Activated CD4-positive, alpha-beta memory T cell treated with anti-CD3 and anti-CD28 coated beads for 36 hours (primary cell): ENCODE measurements at regions of chr17 and their contacts with region 1.

Region 1: DNA sequence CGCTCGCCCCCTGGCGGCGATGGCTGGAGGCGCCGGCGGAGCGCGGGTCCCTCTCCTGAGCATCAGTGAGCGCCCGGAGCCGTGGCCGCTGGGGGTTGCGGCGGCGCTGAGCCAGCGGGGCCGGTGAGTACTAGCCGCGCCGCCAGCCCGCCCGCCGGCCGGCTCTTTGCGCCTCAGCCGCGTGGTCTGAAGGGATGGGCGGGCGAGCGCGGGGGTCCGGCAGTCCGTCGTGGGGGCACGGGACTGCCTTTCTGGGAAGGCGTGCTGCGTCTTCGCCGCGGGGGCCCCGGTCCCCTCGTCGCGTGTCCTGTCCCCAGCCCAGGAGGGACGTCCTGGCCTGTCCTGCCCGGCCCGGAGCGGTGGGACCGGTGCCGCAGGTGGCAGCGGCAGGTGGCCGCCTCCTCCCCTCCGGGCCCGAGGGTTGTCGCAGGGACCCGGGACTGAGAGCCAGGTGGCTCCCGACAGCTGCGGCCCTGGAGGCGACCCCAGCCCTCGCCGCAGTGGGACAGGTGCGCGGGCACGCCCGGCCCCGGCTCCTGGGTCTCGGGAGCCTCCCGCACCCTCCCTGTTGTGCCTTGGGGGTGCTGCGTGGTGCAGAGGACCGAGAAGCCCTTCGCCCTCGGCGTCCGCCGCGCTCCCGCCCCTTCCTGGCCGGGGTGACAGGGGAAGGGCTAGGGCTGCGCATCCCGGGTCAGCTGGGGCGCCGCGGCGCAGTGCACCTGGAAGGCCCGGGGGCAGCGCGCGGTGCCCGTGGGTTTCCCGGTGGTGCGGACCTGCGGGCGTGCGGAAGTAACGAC is at the start of gene SPECC1:
- DNase-seq: peak; percentile 92
- H3K4me3 Mint-ChIP-seq: peak within 1 kb of the TSS; percentile 73
- H3K27ac Mint-ChIP-seq: no peak within 1 kb of the TSS
- H3K4me1 Mint-ChIP-seq: peaks cover 11% of the 10 kb centered on the region
- H3K27me3 Mint-ChIP-seq: peaks cover 27% of the 10 kb centered on the region
- total RNA-seq, gene SPECC1: 15.4 to 17.0 TPM

Region 2: DNA sequence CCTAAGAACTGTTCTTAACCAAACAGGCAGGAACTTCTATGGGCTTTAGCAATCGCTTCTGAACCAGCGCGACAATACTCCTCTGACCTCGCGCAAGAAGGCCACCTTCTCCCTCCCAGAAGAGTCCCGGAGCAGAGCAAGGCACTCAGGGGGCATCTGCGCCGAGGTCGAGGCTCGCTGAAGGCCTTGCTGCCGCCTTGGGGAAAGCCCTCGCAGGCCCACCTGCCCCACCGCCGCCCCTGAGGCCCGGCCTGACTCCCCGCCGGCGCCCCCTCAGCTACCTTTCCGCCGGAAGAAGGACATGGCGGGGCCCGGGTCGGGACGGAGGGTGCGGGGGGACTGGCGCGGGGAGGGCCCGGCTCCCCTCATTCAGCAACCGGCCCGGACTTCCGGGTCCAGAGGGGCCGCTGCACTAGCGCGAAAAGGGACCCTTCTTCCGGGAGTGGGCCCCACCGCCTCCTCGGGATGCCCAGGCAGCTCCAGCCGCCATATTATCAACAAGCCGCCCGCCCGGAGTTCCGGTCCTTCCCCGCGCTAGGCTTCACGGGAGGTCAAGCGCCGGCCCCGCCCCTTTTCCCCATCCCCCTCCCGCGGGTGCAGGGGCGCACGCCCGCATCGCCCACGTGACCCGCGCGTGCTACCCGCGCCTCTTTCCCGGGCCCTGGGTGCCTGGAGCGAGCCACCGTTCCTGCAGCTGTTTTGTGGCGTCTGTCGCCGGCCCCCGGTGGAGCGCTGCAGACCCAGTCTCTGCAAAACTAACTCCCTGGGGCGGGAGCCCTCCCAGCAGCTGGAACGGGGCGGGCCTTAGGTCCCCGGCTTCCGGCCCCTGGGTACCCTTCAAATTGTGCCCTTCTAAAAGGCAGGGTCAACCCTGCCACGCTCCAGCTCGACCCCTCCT is 31.9 kb before region 1 on chr17 and contains the start of gene AKAP10:
- CTCF ChIA-PET with region 1: interaction called, 24 read pairs
- POLR2A ChIA-PET with region 1: interaction called, 3 read pairs
- intact Hi-C with region 1: loop called (anchors 1 kb)
- DNase-seq: peak; percentile 96
- H3K4me3 Mint-ChIP-seq: peak within 1 kb of the TSS; percentile 94
- H3K27ac Mint-ChIP-seq: peak within 1 kb of the TSS; percentile 97
- H3K4me1 Mint-ChIP-seq: peaks cover 49% of the 10 kb centered on the region
- H3K27me3 Mint-ChIP-seq: no peaks in the 10 kb centered on the region
- total RNA-seq, gene AKAP10: 28.4 to 31.8 TPM

Region 3: GRCh38 chr17:19992803-19993713 is 16.4 kb before region 1 on chr17:
- CTCF ChIA-PET with region 1: interaction called, 71 read pairs
- POLR2A ChIA-PET with region 1: no interaction called
- intact Hi-C with region 1: no loop called
- DNase-seq: peak; percentile 85
- H3K4me3 Mint-ChIP-seq: peak overlapping the region; percentile 16
- H3K27ac Mint-ChIP-seq: no peak overlapping the region
- H3K4me1 Mint-ChIP-seq: peaks cover 9% of the 10 kb centered on the region
- H3K27me3 Mint-ChIP-seq: peaks cover 5% of the 10 kb centered on the region

Region 4: DNA sequence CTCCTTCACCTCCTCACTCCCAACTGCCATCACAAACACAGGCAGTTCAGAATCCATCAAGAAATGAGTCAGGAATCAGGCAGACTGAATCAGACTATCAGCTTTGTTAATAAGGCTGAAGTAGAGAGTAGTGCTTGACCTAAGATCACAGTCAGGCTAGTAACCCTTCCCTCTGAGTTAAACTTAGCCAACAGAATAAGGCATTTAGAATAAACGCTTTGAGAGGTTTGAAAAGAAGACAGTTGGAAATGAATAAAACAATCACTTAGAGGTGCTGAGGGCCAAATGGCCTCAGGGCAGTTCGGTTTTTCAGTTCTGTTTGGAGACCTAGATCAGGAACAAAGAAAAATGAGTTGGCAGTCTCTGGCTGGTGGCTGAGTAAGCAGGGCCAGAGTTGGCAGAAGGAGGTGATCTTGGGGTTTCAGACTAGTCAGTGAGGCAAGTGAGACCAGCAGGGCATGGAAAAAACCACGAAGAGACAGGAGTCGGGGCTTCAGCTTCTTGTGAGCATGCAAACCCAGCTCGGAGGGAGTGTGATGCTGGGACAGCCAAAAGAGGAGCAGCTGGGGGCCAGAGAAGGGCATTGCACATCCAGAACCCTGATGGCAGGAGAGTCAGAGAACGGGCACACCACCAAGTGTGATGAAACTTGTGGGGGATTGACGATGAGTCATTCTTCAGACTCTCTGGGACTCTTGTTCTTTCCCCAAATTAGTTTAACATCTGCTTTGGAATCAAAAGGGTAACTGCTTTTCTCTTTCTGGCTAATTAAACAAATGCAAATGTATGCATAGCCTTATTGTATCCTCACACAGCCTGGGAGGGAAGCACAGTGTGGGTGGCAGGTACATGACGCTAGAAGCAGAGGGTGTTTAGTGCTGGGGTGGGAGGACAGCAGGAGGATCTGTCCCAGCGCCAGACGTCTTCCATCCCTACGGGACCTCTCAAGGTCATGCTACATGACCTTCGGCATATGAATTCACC is 54.5 kb after region 1 on chr17:
- CTCF ChIA-PET with region 1: no interaction called
- POLR2A ChIA-PET with region 1: no interaction called
- intact Hi-C with region 1: loop called (anchors 5 kb)
- DNase-seq: peak; percentile 69
- H3K4me3 Mint-ChIP-seq: peak overlapping the region; percentile 40
- H3K27ac Mint-ChIP-seq: peak overlapping the region; percentile 74
- H3K4me1 Mint-ChIP-seq: peaks cover 26% of the 10 kb centered on the region
- H3K27me3 Mint-ChIP-seq: no peaks in the 10 kb centered on the region

Region 5: GRCh38 chr17:20121359-20122253 is 112.1 kb after region 1 on chr17:
- CTCF ChIA-PET with region 1: interaction called, 17 read pairs
- POLR2A ChIA-PET with region 1: no interaction called
- intact Hi-C with region 1: no loop called
- DNase-seq: peak; percentile 74
- H3K4me3 Mint-ChIP-seq: no peak overlapping the region
- H3K27ac Mint-ChIP-seq: no peak overlapping the region
- H3K4me1 Mint-ChIP-seq: no peaks in the 10 kb centered on the region
- H3K27me3 Mint-ChIP-seq: no peaks in the 10 kb centered on the region

Region 6: GRCh38 chr17:20300436-20300934 is 291.0 kb after region 1 on chr17:
- CTCF ChIA-PET with region 1: no interaction called
- POLR2A ChIA-PET with region 1: no interaction called
- intact Hi-C with region 1: no loop called
- DNase-seq: no peak
- H3K4me3 Mint-ChIP-seq: no peak overlapping the region
- H3K27ac Mint-ChIP-seq: no peak overlapping the region
- H3K4me1 Mint-ChIP-seq: no peaks in the 10 kb centered on the region
- H3K27me3 Mint-ChIP-seq: no peaks in the 10 kb centered on the region